ENCODE measurements at regions of chr5 and their contacts with region 1.

Region 1: DNA sequence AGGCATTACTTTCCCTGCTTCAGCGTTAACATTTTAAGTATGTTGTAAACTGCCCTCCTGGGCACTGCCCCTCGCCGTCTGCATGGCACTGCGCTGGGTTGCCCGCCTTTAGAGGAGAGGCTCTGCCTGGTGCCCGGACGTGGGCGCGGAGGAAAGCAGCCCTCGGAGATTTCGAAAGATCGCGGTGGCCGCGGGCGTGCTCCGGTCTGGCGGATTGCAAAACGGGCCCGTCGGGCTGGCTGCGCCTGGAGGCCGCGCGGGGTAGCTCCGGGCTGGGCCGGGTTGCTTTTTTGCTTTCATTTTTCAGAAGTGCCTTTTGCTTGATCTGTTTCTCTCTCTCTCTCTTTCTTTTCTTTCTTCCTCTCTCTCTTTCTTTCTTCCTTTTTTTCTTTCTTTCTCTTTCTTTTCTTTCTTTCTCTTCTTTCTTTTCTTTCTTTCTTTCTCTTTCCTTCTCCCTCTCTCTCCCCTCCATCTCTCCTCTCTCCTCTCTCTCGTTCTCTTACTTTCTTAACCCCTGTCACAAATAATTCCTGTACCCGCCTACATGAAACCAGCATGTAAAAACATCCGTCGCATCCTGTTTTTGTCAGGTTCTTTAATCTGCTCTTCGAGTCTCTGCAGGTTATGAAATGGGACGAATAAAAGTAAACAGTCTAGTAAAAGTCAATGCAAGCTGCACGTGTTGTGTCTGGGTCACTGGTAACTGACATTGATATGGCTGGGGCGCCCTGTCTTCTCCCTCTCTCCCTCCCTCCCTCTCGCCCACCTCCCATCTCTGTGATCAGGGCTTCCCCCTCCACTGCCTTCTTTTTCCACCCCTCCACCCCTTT is 1.7 kb downstream of the FST start:
- DNase-seq: peak; percentile 84
- ATAC-seq: peak; percentile 75

Region 2: GRCh38 chr5:53397845-53398244 is 84.3 kb before region 1 on chr5:
- intact Hi-C with region 1: no loop called
- DNase-seq: peak; percentile 31
- ATAC-seq: peak; percentile 32

Region 3: GRCh38 chr5:54217826-54218503 is 735.9 kb after region 1 on chr5:
- intact Hi-C with region 1: loop called (anchors 5 kb)
- DNase-seq: no peak
- ATAC-seq: peak; percentile 81

Measured in left ventricle myocardium superior (tissue), 1 donor.